GM12878 (cell line): ENCODE measurements at regions of chr20 and their contacts with region 1.

Region 1: DNA sequence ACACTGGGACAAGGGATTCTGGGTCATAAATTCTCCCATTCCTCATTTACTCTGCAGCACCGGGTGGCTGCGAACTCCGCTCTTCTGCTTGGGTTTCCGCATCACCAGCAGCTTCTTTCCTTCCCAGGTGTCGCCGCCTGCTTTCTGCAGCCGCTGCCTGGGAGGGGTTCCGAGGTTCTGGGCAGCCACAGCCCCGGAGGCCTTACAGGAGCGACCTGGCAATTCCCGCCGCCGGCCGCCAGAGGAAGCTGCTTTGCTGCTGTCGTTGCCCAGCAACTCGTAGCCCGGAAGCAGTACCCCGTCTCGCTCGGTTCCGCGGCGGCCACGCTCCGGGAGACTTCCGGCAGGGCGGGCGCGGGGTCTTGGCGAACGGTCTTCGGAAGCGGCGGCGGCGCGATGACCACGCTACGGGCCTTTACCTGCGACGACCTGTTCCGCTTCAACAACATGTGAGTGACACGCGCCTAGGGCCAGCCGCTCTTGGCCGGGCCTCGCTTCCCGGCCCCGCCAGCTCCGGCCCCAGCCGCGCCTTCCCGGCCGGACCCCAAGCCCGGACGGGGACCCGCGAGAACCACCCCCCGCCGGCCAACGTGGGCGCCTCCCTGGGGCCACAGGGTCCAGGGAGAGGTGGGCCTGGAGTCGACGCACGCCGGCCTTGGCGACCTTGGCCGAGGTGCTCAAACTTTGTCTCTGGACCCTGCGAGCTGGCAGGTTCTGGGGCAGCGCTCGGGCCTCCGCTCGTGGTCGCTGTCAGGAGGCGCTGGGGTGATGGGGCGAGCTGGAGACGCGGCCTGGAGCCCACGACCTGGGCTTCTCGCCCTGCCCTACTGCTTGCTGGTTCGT is at the start of gene NAA20:
- DNase-seq: peak; percentile 45
- ATAC-seq: peak; percentile 97
- H3K4me3 ChIP-seq: peak within 1 kb of the TSS; percentile 82
- H3K27ac ChIP-seq: peak within 1 kb of the TSS; percentile 74
- H3K4me1 ChIP-seq: peaks cover 14% of the 10 kb centered on the region
- H3K27me3 ChIP-seq: no peaks in the 10 kb centered on the region
- CTCF ChIP-seq: peak; percentile 72 to 91 (median 85)
- EP300 ChIP-seq: no peak
- POLR2A ChIP-seq: peak; percentile 86
- RAD21 ChIP-seq: peak; percentile 49; the same call in 1 of the 2 replicates
- polyA plus RNA-seq, gene NAA20: 309 to 366 TPM

Region 2: GRCh38 chr20:18587665-18588573 is 1429.3 kb before region 1 on chr20 and contains the start of gene DTD1:
- CTCF ChIA-PET with region 1: no interaction called
- POLR2A ChIA-PET with region 1: no interaction called
- RAD21 ChIA-PET with region 1: no interaction called
- SMC1A ChIA-PET with region 1: no interaction called
- in situ Hi-C with region 1: loop called (anchors 25 kb)
- intact Hi-C with region 1: no loop called
- DNase-seq: peak; percentile 57
- ATAC-seq: peak; percentile 94
- H3K4me3 ChIP-seq: peak within 1 kb of the TSS; percentile 92
- H3K27ac ChIP-seq: peak within 1 kb of the TSS; percentile 65
- H3K4me1 ChIP-seq: no peaks in the 10 kb centered on the region
- H3K27me3 ChIP-seq: no peaks in the 10 kb centered on the region
- CTCF ChIP-seq: peak; percentile 56 to 73 (median 63)
- EP300 ChIP-seq: no peak
- POLR2A ChIP-seq: peak; percentile 90
- RAD21 ChIP-seq: no peak
- polyA plus RNA-seq, gene DTD1: 24.3 to 35.5 TPM

Region 3: GRCh38 chr20:20003031-20003954 is 13.9 kb before region 1 on chr20:
- CTCF ChIA-PET with region 1: interaction called, 16 read pairs
- POLR2A ChIA-PET with region 1: interaction called, 3 read pairs
- RAD21 ChIA-PET with region 1: interaction called, 5 read pairs
- SMC1A ChIA-PET with region 1: interaction called, 4 read pairs
- in situ Hi-C with region 1: no loop called
- intact Hi-C with region 1: no loop called
- DNase-seq: no peak
- ATAC-seq: peak; percentile 69
- H3K4me3 ChIP-seq: no peak overlapping the region; the same call in 1 of the 2 replicates
- H3K27ac ChIP-seq: no peak overlapping the region
- H3K4me1 ChIP-seq: 0 out of 2 replicates have a peak, but pooled peaks cover 5% of the 10 kb centered on the region
- H3K27me3 ChIP-seq: peaks cover 2 to 8% of the 10 kb centered on the region in 2 experiments; a peak in 3 of 4 replicates
- CTCF ChIP-seq: no peak
- EP300 ChIP-seq: no peak
- POLR2A ChIP-seq: no peak
- RAD21 ChIP-seq: no peak

Region 4: GRCh38 chr20:20052074-20052970 is 35.1 kb after region 1 on chr20 and contains the starts of genes CFAP61 and CRNKL1:
- CTCF ChIA-PET with region 1: interaction called, 9 read pairs
- POLR2A ChIA-PET with region 1: interaction called, 5 read pairs
- RAD21 ChIA-PET with region 1: interaction called, 14 read pairs
- SMC1A ChIA-PET with region 1: interaction called, 16 read pairs
- in situ Hi-C with region 1: no loop called
- intact Hi-C with region 1: loop called (anchors 1 kb)
- DNase-seq: peak; percentile 96
- ATAC-seq: peak; percentile 95
- H3K4me3 ChIP-seq: peak within 1 kb of the TSS; percentile 83
- H3K27ac ChIP-seq: peak within 1 kb of the TSS; percentile 87
- H3K4me1 ChIP-seq: no peaks in the 10 kb centered on the region
- H3K27me3 ChIP-seq: no peaks in the 10 kb centered on the region
- CTCF ChIP-seq: no peak
- EP300 ChIP-seq: no peak
- POLR2A ChIP-seq: peak; percentile 90
- RAD21 ChIP-seq: no peak
- polyA plus RNA-seq, gene CFAP61: not detected
- polyA plus RNA-seq, gene CRNKL1: 9.5 to 18.6 TPM